ENCODE measurements at regions of chr13 and their contacts with region 1.

Region 1: GRCh38 chr13:101626925-101627555 is 174.6 kb downstream of the ITGBL1 start:
- DNase-seq: peak; percentile 58
- H3K4me3 Mint-ChIP-seq: peak overlapping the region; percentile 3
- H3K27ac Mint-ChIP-seq: no peak overlapping the region
- H3K4me1 Mint-ChIP-seq: peaks cover 43% of the 10 kb centered on the region
- H3K27me3 Mint-ChIP-seq: peaks cover 14% of the 10 kb centered on the region

Region 2: DNA sequence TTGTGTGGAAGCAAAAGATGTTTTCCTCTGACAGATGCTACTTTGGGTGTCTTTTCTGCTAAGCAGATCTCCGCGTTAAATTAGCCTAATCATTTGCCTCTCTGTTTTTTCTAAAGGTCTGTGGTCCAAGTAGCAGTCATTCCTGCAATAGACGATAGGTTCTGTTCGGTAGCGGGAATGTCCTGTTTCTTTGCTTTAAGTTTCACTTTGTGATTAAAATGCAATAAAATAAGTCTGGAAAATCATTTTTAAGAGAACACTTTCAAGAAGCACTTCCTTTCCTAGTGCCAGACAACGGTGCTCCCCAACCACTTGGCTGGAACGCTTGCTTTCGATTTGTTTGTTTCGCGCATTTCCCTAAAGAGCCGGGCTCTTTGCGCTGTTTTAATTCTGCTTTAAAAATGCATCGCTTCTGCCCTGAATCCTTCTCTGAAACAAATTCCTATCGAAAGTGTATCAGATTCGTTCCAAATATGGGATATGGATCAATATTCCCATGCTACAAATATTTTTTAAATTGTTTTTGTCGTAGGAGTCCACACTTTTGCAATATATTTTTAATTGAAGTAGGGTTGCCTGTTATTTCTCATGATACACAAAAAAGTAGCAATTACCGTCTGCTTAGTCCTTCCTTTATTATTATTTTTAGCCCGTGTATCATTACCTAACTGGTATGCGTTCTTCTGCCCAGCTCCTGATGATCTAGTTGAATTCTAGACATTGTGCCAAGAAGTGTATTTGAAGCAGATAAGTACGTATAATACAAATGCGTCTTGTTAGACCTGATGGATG is 1631.3 kb before region 1 on chr13:
- CTCF ChIA-PET with region 1: no interaction called
- intact Hi-C with region 1: loop called (anchors 10 kb)
- DNase-seq: no peak
- H3K4me3 Mint-ChIP-seq: no peak overlapping the region
- H3K27ac Mint-ChIP-seq: no peak overlapping the region
- H3K4me1 Mint-ChIP-seq: peaks cover 10% of the 10 kb centered on the region
- H3K27me3 Mint-ChIP-seq: peaks cover 77% of the 10 kb centered on the region

Region 3: DNA sequence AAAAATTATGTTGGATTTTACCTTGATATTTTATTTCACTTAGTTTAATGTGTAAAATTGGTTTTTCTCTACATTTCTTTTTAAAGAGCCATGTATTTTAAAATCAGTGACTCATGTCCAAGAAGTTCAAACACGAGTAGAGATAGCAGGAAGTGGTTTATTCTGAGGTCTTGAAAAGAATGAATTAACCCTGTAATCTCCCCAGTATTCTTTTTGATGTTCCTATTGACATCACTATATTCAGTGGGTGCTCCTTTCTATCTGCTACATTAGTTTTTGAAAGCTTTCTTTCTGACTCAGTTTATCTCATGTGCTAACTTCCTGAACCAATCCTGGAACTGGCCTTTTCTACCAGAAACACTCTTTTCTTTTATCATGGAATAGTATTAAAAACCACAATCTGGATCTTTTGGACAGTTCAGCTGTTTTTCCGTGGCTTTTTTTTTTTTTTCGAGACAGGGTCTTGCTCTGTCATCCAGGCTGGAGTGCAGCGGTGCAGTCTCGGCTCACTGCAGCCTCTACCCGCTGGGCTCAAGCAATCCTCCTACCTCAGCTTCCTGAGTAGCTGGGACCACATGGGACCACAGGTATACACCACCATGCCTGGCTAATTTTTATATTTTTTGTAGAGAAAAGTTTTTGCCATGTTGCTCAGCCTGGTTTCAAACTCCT is 1423.2 kb before region 1 on chr13:
- CTCF ChIA-PET with region 1: no interaction called
- intact Hi-C with region 1: loop called (anchors 10 kb)
- DNase-seq: peak; percentile 8
- H3K4me3 Mint-ChIP-seq: no peak overlapping the region
- H3K27ac Mint-ChIP-seq: peak overlapping the region; percentile 47
- H3K4me1 Mint-ChIP-seq: peaks cover 17% of the 10 kb centered on the region
- H3K27me3 Mint-ChIP-seq: no peaks in the 10 kb centered on the region

Region 4: DNA sequence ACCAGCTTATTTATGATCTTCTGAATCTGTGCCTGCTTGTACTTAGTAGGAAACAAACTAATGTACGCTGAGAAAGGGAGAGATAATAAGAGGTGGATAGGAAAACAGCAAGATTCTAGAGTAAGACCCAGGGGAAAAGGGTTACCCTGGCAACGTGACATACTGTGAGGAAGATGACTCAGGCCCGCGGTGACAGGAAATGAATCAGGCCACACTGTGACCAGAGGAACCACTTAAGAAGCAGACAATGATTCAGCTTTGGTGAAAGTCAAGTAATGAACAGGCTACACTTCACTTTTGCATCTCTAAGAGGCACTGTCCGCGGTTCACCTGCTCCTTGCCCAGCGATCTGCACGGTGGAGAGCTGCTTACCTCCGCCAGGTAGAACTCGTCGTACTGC is 369.0 kb before region 1 on chr13:
- CTCF ChIA-PET with region 1: no interaction called
- intact Hi-C with region 1: loop called (anchors 5 kb)
- DNase-seq: peak; percentile 64
- H3K4me3 Mint-ChIP-seq: no peak overlapping the region
- H3K27ac Mint-ChIP-seq: no peak overlapping the region
- H3K4me1 Mint-ChIP-seq: peaks cover 2% of the 10 kb centered on the region
- H3K27me3 Mint-ChIP-seq: peaks cover 4% of the 10 kb centered on the region

Region 5: DNA sequence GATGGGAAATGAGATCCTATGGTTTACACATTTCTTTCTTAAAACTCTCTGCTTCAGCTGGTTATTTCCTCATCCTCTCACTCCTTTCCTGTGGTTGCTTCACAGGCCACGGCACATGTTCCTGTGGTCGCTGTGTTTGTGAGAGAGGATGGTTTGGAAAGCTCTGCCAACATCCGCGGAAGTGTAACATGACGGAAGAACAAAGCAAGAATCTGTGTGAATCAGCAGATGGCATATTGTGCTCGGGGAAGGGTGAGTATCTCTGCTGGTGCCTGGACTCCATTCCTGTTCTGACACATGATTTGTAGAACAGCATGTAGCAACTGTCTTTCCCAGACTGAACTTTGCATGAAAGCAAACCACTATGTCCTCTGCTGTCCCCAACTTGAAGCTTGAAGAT is 79.6 kb after region 1 on chr13:
- CTCF ChIA-PET with region 1: no interaction called
- intact Hi-C with region 1: loop called (anchors 5 kb)
- DNase-seq: peak; percentile 38
- H3K4me3 Mint-ChIP-seq: no peak overlapping the region
- H3K27ac Mint-ChIP-seq: no peak overlapping the region
- H3K4me1 Mint-ChIP-seq: peaks cover 6% of the 10 kb centered on the region
- H3K27me3 Mint-ChIP-seq: peaks cover 12% of the 10 kb centered on the region

Region 6: DNA sequence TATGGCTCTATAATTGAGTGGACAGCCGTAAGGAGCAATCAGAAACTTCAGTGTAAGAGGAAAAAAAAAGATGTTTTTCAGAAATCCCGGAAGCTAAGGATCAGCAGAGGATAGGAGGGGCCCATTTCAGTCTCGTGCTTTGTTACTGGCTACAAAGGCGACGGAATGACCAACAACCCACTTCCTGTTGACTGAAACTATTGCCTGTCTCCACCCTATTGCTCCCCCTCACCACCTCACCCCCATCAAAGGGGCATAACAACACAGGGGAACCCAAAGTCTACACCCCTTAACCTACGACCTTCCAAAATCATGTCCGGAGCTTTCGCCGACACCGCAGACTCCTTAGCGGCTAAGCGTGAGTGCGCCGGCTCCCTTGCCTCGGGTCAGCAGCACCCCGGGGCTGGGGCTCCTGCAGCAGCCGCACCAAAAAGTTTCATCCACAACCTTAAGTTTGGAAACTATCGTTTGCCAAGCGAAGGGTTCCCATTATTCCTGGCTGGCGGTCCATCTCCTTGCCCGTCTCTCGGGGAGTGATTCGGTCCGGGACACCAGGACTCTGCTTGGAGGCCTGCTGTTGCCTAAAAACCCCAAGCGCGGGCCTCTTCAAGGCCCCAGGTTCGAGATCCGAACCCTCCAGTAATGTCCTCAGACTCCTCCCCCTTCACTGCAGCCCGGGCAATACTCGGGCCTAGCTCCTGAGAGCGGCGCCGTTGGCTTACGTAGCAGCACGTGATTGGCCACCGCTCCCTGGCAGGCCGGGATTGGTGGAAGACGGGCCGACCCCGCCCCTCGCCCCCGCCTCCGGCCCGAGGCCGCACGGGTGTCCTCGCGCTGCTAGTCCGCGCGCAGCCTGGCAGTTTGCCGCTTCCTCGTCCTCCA is 969.3 kb after region 1 on chr13 and contains the start of gene TPP2:
- CTCF ChIA-PET with region 1: no interaction called
- intact Hi-C with region 1: loop called (anchors 2 kb)
- DNase-seq: peak; percentile 98
- H3K4me3 Mint-ChIP-seq: peak within 1 kb of the TSS; percentile 98
- H3K27ac Mint-ChIP-seq: peak within 1 kb of the TSS; percentile 100
- H3K4me1 Mint-ChIP-seq: peaks cover 55% of the 10 kb centered on the region
- H3K27me3 Mint-ChIP-seq: no peaks in the 10 kb centered on the region
- total RNA-seq, gene TPP2: 51.9 to 54.7 TPM

Region 7: DNA sequence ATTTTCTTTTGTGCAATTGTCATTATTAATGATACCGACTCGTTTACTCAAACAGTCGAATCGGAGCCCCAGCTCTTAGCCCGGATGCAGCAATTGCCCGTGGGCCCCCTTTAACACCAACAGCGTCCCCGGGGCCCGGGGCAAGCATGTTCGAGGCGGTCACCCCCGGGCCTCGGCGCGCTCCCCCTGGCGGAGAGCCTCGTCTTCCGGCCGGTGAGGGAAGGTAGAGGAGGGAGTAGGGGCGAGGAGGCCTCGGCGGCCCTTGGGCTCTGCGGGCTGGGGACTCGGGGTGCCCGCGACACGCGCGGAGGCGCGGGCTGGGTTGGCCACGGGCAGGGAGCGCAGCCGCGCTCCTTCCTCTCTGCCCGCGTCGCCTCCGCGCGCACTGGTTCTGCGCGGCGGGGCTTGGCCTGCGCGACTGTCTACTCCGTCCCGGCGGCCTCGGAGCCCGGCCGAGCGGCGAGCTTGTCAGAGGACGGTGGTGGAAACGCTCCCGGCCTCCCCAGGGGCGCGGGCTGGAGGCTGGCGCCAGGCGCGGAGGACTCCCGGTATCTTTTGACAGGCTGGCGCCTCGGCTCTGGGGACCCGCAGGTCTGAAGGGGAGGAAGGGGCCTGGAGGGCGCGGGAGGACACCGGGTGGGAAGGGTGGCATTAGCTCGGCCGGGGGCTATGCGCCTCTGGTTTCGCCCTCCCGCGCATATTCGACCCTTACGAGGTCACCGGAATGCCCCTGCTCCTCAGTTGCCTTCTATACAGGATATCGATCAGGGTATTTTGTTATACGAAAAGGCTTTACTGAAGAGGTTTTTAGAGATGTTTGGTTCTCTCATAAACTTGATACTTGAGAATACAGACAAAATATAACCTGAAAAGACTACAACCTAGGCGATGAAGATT is 1173.4 kb after region 1 on chr13:
- CTCF ChIA-PET with region 1: no interaction called
- intact Hi-C with region 1: loop called (anchors 5 kb)
- DNase-seq: peak; percentile 83
- H3K4me3 Mint-ChIP-seq: peak overlapping the region; percentile 93
- H3K27ac Mint-ChIP-seq: no peak overlapping the region
- H3K4me1 Mint-ChIP-seq: peaks cover 13% of the 10 kb centered on the region
- H3K27me3 Mint-ChIP-seq: peaks cover 21% of the 10 kb centered on the region